CD4-positive, alpha-beta T cell (primary cell): ENCODE measurements at regions of chr14 and their contacts with region 1.

Region 1: DNA sequence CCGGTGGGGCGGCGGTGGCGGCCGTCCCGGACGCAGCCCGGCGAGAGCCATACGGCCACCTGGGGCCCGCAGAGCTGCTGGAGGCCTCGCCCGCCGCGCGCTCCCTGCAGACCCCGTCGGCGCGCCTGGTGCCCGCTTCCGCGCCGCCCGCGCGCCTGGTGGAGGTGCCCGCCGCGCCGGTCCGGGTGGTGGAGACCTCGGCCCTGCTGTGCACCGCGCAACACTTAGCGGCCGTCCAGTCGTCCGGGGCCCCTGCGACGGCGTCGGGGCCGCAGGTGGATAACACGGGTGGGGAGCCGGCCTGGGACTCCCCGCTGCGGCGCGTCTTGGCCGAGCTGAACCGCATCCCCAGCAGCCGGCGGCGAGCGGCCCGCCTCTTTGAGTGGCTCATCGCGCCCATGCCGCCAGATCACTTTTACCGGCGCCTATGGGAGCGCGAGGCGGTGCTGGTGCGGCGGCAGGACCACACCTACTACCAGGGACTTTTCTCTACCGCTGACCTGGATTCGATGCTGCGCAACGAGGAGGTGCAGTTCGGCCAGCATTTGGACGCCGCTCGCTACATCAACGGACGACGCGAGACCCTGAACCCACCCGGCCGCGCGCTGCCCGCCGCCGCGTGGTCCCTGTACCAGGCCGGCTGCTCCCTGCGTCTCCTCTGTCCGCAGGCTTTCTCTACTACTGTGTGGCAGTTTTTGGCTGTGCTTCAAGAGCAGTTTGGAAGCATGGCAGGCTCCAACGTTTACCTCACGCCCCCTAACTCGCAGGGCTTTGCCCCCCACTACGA is 716 bp downstream of the RIOX1 start:
- DNase-seq: peak; percentile 31 to 90 (median 64)
- ATAC-seq: peak; percentile 72
- H3K4me3 ChIP-seq: peak overlapping the region; percentile 77
- H3K4me3 Mint-ChIP-seq: peak overlapping the region; percentile 95
- H3K27ac ChIP-seq: peak overlapping the region; percentile 52 to 83
- H3K27ac Mint-ChIP-seq: peak overlapping the region; percentile 94
- H3K4me1 ChIP-seq: peaks cover 43% of the 10 kb centered on the region
- H3K4me1 Mint-ChIP-seq: peaks cover 59% of the 10 kb centered on the region
- H3K27me3 ChIP-seq: no peaks in the 10 kb centered on the region
- H3K27me3 Mint-ChIP-seq: no peaks in the 10 kb centered on the region
- CTCF ChIP-seq: no peak

Region 2: GRCh38 chr14:73136387-73137225 is 354.8 kb before region 1 on chr14 and contains the start of gene PSEN1:
- CTCF ChIA-PET with region 1: no interaction called
- POLR2A ChIA-PET with region 1: interaction called, 23 read pairs
- intact Hi-C with region 1: no loop called
- DNase-seq: peak; percentile 97 to 99 (median 99)
- ATAC-seq: peak; percentile 93
- H3K4me3 ChIP-seq: peak within 1 kb of the TSS; percentile 98
- H3K4me3 Mint-ChIP-seq: peak within 1 kb of the TSS; percentile 98
- H3K27ac ChIP-seq: peak within 1 kb of the TSS; percentile 92
- H3K27ac Mint-ChIP-seq: peak within 1 kb of the TSS; percentile 99
- H3K4me1 ChIP-seq: peaks cover 23% of the 10 kb centered on the region
- H3K4me1 Mint-ChIP-seq: peaks cover 31% of the 10 kb centered on the region
- H3K27me3 ChIP-seq: no peaks in the 10 kb centered on the region
- H3K27me3 Mint-ChIP-seq: no peaks in the 10 kb centered on the region
- CTCF ChIP-seq: no peak
- total RNA-seq, gene PSEN1: 27.1 to 28.3 TPM

Region 3: GRCh38 chr14:73503648-73504047 is 12.2 kb after region 1 on chr14:
- CTCF ChIA-PET with region 1: interaction called, 4 read pairs
- POLR2A ChIA-PET with region 1: interaction called, 18 read pairs
- intact Hi-C with region 1: no loop called
- DNase-seq: peak in 1 of 14 experiments; percentile 42
- ATAC-seq: no peak
- H3K4me3 ChIP-seq: no peak overlapping the region
- H3K4me3 Mint-ChIP-seq: no peak overlapping the region
- H3K27ac ChIP-seq: no peak overlapping the region
- H3K27ac Mint-ChIP-seq: no peak overlapping the region
- H3K4me1 ChIP-seq: no peaks in the 10 kb centered on the region
- H3K4me1 Mint-ChIP-seq: no peaks in the 10 kb centered on the region
- H3K27me3 ChIP-seq: no peaks in the 10 kb centered on the region
- H3K27me3 Mint-ChIP-seq: no peaks in the 10 kb centered on the region
- CTCF ChIP-seq: no peak

Region 4: DNA sequence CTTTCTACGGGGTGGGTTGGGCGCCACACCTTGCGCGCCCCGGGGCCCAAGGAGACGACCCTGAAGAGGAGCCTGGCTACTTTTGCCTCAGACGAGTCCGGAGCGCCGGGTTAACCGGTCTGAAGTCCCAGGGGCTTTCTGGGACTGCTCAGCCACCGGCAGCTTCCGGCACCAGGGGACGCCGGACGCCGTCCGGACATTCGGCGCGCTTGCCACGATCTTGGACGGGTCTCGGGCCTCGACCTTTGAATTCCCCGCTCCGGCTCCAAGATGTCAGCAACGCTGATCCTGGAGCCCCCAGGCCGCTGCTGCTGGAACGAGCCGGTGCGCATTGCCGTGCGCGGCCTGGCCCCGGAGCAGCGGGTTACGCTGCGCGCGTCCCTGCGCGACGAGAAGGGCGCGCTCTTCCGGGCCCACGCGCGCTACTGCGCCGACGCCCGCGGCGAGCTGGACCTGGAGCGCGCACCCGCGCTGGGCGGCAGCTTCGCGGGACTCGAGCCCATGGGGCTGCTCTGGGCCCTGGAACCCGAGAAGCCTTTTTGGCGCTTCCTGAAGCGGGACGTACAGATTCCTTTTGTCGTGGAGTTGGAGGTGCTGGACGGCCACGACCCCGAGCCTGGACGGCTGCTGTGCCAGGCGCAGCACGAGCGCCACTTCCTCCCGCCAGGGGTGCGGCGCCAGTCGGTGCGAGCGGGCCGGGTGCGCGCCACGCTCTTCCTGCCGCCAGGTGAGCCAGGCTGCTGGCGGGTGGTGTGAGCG is 100.4 kb after region 1 on chr14 and contains the start of gene ACOT4:
- CTCF ChIA-PET with region 1: no interaction called
- POLR2A ChIA-PET with region 1: interaction called, 19 read pairs
- intact Hi-C with region 1: no loop called
- DNase-seq: peak in 13 of 14 experiments; percentile 35 to 88 (median 57)
- ATAC-seq: peak; percentile 89
- H3K4me3 ChIP-seq: peak within 1 kb of the TSS; percentile 88
- H3K4me3 Mint-ChIP-seq: peak within 1 kb of the TSS; percentile 82
- H3K27ac ChIP-seq: peak within 1 kb of the TSS in 1 of 2 donors; percentile 58
- H3K27ac Mint-ChIP-seq: peak within 1 kb of the TSS; percentile 71
- H3K4me1 ChIP-seq: peaks cover 11% of the 10 kb centered on the region
- H3K4me1 Mint-ChIP-seq: peaks cover 6% of the 10 kb centered on the region
- H3K27me3 ChIP-seq: no peaks in the 10 kb centered on the region
- H3K27me3 Mint-ChIP-seq: no peaks in the 10 kb centered on the region
- CTCF ChIP-seq: peak; percentile 20
- total RNA-seq, gene ACOT4: 1.0 to 1.2 TPM

Region 5: GRCh38 chr14:73713803-73714655 is 222.6 kb after region 1 on chr14 and contains the start of gene PNMA1:
- CTCF ChIA-PET with region 1: no interaction called
- POLR2A ChIA-PET with region 1: interaction called, 6 read pairs
- intact Hi-C with region 1: loop called in 1 of 2 experiments (anchors 5 kb)
- DNase-seq: peak; percentile 75 to 95 (median 82)
- ATAC-seq: peak; percentile 68
- H3K4me3 ChIP-seq: peak within 1 kb of the TSS; percentile 87
- H3K4me3 Mint-ChIP-seq: peak within 1 kb of the TSS; percentile 96
- H3K27ac ChIP-seq: peak within 1 kb of the TSS; percentile 73 to 77
- H3K27ac Mint-ChIP-seq: peak within 1 kb of the TSS; percentile 92
- H3K4me1 ChIP-seq: peaks cover 33% of the 10 kb centered on the region
- H3K4me1 Mint-ChIP-seq: peaks cover 33% of the 10 kb centered on the region
- H3K27me3 ChIP-seq: no peaks in the 10 kb centered on the region
- H3K27me3 Mint-ChIP-seq: no peaks in the 10 kb centered on the region
- CTCF ChIP-seq: no peak
- total RNA-seq, gene PNMA1: 52.6 to 55.9 TPM

Region 6: GRCh38 chr14:73851644-73852382 is 360.4 kb after region 1 on chr14 and contains the start of gene PTGR2:
- CTCF ChIA-PET with region 1: no interaction called
- POLR2A ChIA-PET with region 1: interaction called, 10 read pairs
- intact Hi-C with region 1: no loop called
- DNase-seq: peak; percentile 77 to 97 (median 85)
- ATAC-seq: peak; percentile 93
- H3K4me3 ChIP-seq: peak within 1 kb of the TSS; percentile 63
- H3K4me3 Mint-ChIP-seq: peak within 1 kb of the TSS; percentile 91
- H3K27ac ChIP-seq: peak within 1 kb of the TSS; percentile 54 to 72
- H3K27ac Mint-ChIP-seq: peak within 1 kb of the TSS; percentile 94
- H3K4me1 ChIP-seq: peaks cover 17% of the 10 kb centered on the region
- H3K4me1 Mint-ChIP-seq: peaks cover 24% of the 10 kb centered on the region
- H3K27me3 ChIP-seq: no peaks in the 10 kb centered on the region
- H3K27me3 Mint-ChIP-seq: no peaks in the 10 kb centered on the region
- CTCF ChIP-seq: no peak
- total RNA-seq, gene PTGR2: 0.70 to 1.1 TPM

Region 7: DNA sequence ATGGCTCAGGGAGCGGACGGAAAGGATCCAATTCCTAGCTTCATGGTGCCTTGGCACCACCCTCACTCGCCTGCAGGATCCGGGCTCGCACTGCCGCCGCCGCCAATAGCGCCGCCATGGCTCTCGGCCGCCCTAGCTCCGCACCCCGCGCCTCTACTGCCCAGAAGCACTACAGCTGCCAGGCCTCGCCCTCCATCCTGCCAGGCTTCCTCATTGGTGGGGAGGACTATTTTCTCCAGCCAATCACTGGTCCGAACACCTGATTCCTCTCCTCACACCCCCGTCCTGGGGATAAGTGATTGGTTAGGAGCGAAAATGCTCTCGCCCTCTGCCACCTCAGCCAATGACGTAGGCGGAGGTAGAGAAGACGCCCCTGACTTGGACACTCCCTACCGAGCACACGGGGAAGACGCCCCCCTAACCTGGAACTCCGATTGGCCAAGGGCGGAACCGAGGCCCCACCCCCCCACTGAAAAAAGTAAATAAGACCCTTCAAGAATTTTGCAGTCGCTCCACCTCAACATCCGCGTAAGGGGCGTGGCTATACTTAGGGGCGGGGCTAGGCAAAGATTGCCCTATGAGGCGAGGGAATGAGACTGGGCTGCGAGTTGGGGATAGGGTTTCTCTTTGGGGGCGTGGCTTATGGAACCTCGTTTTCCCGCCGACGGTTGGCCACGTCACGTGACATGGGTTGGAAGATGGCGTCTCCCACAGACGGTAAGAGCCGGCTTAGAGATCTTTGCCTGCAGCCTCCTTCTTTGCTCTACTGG is 593.0 kb after region 1 on chr14 and contains the starts of genes ALDH6A1 and LIN52:
- CTCF ChIA-PET with region 1: no interaction called
- POLR2A ChIA-PET with region 1: no interaction called
- intact Hi-C with region 1: loop called in 1 of 2 experiments (anchors 10 kb)
- DNase-seq: peak; percentile 98 to 100 (median 100)
- ATAC-seq: peak; percentile 86
- H3K4me3 ChIP-seq: peak within 1 kb of the TSS; percentile 95
- H3K4me3 Mint-ChIP-seq: peak within 1 kb of the TSS; percentile 94
- H3K27ac ChIP-seq: peak within 1 kb of the TSS; percentile 52 to 72
- H3K27ac Mint-ChIP-seq: peak within 1 kb of the TSS; percentile 86
- H3K4me1 ChIP-seq: peaks cover 21% of the 10 kb centered on the region
- H3K4me1 Mint-ChIP-seq: peaks cover 36% of the 10 kb centered on the region
- H3K27me3 ChIP-seq: no peaks in the 10 kb centered on the region
- H3K27me3 Mint-ChIP-seq: no peaks in the 10 kb centered on the region
- CTCF ChIP-seq: no peak
- total RNA-seq, gene ALDH6A1: 5.3 to 6.2 TPM
- total RNA-seq, gene LIN52: 5.4 to 6.8 TPM